ENCODE measurements at regions of chr17 and their contacts with region 1.

Region 1: GRCh38 chr17:64025732-64026294 is 5.4 kb upstream of the ICAM2 start:
- DNase-seq: peak; percentile 85
- H3K4me3 Mint-ChIP-seq: peak overlapping the region; percentile 80
- H3K27ac Mint-ChIP-seq: peak overlapping the region; percentile 88
- H3K4me1 Mint-ChIP-seq: peaks cover 70% of the 10 kb centered on the region
- H3K27me3 Mint-ChIP-seq: no peaks in the 10 kb centered on the region

Region 2: DNA sequence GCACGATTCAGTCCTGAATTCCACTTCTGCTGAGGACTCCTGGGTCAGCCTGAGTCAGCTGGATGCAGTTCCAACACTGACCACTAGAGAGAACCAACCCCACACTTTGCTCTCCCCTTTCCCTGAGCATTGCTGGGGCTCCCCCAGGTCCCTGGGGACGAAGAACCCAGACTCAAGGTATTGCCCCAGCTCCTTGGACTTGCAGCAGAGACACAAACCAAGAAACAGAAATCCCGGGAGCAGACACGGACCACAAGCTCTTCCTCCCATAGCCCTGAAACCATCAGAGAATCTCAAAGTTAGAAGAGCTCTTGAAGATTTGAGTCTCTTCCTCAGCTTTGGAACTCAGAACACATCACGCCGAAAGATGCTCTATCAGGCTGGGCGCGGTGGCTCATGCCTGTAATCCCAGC is 106.5 kb before region 1 on chr17:
- intact Hi-C with region 1: loop called (anchors 1 kb)
- DNase-seq: peak; percentile 65
- H3K4me3 Mint-ChIP-seq: no peak overlapping the region
- H3K27ac Mint-ChIP-seq: no peak overlapping the region
- H3K4me1 Mint-ChIP-seq: peaks cover 7% of the 10 kb centered on the region
- H3K27me3 Mint-ChIP-seq: peaks cover 8% of the 10 kb centered on the region

Region 3: DNA sequence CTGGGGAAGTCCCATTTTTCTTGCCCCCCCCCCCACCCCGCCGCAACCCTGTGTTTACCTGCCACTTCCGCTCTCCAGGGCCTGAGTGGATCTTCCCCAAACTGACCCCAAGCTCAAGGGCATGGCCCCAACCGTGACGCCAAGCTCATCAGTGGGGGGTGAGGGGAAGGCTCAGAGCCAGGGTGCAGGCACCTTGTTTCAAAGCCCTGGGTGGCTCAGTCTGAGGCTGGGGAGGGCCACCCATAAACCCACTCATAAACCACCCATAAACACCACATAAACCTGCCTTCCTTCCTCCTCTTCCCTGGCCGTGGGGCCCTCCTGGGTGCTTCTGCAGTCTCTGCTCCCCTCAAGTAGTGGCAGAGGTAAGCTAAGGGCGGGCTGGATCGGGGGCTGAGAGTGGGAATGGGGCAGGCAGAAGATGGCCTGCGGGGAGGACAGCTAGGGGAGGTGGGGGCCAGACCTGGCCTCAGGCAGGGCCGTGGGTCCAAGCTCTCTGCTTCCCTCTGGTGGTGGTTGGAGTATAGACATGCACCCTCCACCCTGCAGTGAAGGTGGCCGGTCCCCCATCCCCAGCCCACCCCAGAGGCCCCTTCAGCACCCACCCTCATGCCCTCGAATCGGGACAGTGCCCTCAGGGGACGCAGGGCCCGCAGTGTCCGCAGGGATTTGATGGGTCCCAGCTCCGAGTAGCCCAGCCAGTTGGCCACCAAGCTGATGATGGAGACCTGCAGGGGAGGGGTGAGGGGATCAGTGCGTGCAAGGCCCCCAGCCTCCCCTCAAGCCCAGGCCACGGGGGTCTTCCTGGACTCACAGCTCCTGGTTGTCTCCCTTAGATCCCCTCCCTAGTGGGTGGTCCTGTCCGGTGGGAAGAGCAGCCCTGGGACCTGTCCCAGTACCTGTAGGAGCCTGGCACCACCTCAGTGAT is 79.1 kb before region 1 on chr17:
- intact Hi-C with region 1: loop called (anchors 2 kb)
- DNase-seq: peak; percentile 44
- H3K4me3 Mint-ChIP-seq: peak overlapping the region; percentile 73
- H3K27ac Mint-ChIP-seq: peak overlapping the region; percentile 84
- H3K4me1 Mint-ChIP-seq: peaks cover 12% of the 10 kb centered on the region
- H3K27me3 Mint-ChIP-seq: peaks cover 6% of the 10 kb centered on the region

Region 4: DNA sequence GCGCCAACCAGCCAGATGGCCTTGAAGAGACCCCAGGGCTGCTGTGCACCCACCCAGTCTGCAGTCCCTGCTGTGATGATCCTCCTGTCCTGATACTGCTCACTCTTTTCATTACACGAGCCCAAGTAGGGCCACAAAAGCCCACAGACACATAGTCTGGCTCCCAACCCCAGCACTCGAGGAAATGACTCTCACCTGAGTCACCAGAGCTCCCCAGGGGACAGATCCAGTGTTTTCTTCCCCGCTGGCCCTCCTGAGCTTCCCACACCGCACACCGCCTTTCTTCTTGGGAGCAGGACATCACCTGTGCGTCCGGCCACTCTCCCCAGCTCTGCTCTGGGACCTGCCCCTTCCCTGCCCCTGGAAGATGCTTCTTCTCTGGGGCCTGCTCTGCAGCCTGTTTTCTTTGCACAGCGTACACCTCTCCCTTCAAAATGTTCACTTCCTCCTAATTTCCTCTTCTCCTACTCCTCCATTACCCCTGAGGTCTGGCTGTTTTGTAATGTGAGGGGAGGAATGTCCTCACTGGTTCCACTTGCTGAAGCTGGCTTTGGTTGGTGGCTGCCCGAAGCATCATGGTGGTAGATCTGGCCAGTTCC is 51.1 kb before region 1 on chr17:
- intact Hi-C with region 1: no loop called
- DNase-seq: no peak
- H3K4me3 Mint-ChIP-seq: no peak overlapping the region
- H3K27ac Mint-ChIP-seq: no peak overlapping the region
- H3K4me1 Mint-ChIP-seq: no peaks in the 10 kb centered on the region
- H3K27me3 Mint-ChIP-seq: peaks cover 9% of the 10 kb centered on the region

Region 5: GRCh38 chr17:64009495-64010402 is 16.1 kb before region 1 on chr17:
- intact Hi-C with region 1: no loop called
- DNase-seq: no peak
- H3K4me3 Mint-ChIP-seq: no peak overlapping the region
- H3K27ac Mint-ChIP-seq: no peak overlapping the region
- H3K4me1 Mint-ChIP-seq: peaks cover 45% of the 10 kb centered on the region
- H3K27me3 Mint-ChIP-seq: no peaks in the 10 kb centered on the region

Region 6: GRCh38 chr17:64063766-64064224 is 38.0 kb after region 1 on chr17:
- intact Hi-C with region 1: loop called (anchors 5 kb)
- DNase-seq: peak; percentile 23
- H3K4me3 Mint-ChIP-seq: no peak overlapping the region
- H3K27ac Mint-ChIP-seq: peak overlapping the region; percentile 63
- H3K4me1 Mint-ChIP-seq: peaks cover 91% of the 10 kb centered on the region
- H3K27me3 Mint-ChIP-seq: no peaks in the 10 kb centered on the region

Region 7: GRCh38 chr17:64091116-64091515 is 65.3 kb after region 1 on chr17:
- intact Hi-C with region 1: no loop called
- DNase-seq: peak; percentile 20
- H3K4me3 Mint-ChIP-seq: peak overlapping the region; percentile 81
- H3K27ac Mint-ChIP-seq: peak overlapping the region; percentile 98
- H3K4me1 Mint-ChIP-seq: peaks cover 89% of the 10 kb centered on the region
- H3K27me3 Mint-ChIP-seq: no peaks in the 10 kb centered on the region

Region 8: GRCh38 chr17:64145757-64146417 is 120.1 kb after region 1 on chr17:
- intact Hi-C with region 1: loop called (anchors 5 kb)
- DNase-seq: peak; percentile 93
- H3K4me3 Mint-ChIP-seq: no peak overlapping the region
- H3K27ac Mint-ChIP-seq: no peak overlapping the region
- H3K4me1 Mint-ChIP-seq: peaks cover 19% of the 10 kb centered on the region
- H3K27me3 Mint-ChIP-seq: peaks cover 2% of the 10 kb centered on the region

Region 9: DNA sequence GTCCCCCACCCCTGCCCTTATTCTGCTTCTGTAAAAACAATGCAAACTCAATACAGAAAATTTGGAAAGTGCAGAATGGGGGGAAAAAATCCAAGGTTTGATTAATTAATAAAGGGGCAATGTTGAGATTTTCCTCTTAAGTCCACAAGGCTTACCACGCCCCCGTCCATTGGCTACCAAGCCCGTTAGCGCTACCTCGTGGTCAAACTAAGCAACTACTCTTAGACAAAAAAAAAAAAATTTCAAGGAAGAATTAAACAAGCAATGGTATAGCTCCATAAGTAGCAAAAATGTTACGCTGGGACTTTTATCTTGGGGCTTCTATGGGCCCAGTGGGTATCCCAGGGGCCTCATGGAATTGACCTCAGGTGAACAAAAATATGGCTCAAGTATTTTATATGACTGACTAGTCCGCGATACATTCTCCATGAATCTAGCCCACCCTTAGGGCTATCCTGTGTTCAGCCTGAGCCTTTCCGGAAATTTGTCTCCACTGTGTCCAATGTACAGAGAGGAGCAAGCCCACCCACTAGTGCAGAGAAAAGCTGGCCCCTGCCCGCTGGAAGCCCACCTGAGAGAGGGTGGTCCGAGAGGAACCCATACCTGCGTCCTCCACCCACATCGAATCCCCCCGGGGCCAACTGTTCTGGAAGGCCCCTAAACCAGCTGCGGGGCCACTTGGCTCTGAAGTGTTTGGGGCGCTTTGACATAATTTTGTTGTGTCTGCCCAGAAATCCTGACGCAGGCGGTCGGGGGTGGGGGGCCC is 256.3 kb after region 1 on chr17:
- intact Hi-C with region 1: loop called (anchors 2 kb)
- DNase-seq: peak; percentile 28
- H3K4me3 Mint-ChIP-seq: no peak overlapping the region
- H3K27ac Mint-ChIP-seq: no peak overlapping the region
- H3K4me1 Mint-ChIP-seq: peaks cover 7% of the 10 kb centered on the region
- H3K27me3 Mint-ChIP-seq: no peaks in the 10 kb centered on the region

Region 10: GRCh38 chr17:64781014-64781753 is 755.4 kb after region 1 on chr17:
- intact Hi-C with region 1: loop called (anchors 10 kb)
- DNase-seq: peak; percentile 61
- H3K4me3 Mint-ChIP-seq: peak overlapping the region; percentile 78
- H3K27ac Mint-ChIP-seq: peak overlapping the region; percentile 48
- H3K4me1 Mint-ChIP-seq: peaks cover 29% of the 10 kb centered on the region
- H3K27me3 Mint-ChIP-seq: peaks cover 6% of the 10 kb centered on the region